ENCODE measurements at regions of chr3 and their contacts with region 1.

Region 1: DNA sequence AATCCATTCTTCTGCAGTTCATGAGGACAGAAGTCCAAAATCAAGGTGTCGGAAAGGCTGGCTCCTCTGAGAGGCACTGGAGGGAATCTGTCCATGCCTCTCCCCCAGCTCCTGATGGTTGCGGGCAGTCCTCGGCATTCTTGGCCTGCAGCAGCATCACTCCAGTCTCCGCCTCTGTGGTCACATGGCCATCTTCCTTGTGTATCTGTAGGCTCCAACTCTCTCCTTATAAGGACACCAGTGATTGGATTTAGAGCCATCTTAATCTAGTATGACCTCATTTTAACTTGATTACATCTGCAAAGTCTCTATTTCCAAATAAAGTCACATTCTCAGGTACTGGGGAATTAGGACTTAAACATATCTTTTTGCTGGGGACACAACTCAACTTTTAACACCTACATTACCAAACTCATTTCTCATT is 56.0 kb upstream of the FLNB start:
- DNase-seq: peak; percentile 83

Region 2: DNA sequence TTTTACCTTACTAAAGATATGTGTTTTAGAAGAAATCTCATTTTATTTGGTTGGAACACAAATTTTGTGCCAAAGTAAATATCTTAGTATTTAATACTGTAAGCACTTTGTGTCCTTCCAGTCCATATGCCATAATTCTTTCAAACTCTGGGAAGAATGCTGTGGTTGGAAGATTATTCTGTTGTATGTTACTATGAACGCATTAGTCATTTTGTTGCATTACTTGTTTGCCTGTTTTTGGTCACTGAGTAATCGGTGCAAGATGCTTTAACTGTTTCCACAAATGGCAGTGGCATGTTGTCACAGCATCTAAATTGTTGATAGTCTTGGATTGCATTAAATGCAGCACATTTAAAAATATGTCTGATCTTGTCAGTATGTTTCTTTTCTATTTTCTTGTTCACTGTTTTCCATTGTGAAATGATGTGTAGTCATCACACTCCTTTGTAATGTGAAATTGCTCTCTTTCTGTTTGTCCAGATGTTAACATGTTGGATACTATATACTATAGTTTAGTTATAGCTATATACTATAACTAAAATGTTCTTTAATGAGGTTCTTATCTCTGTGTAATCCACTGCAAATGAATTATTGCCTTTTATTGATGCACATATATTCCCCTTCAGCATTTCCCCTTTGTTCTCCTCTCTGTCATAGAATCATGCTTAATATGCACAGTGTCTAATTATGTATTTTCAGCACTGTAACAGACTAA is 33.9 kb before region 1 on chr3:
- intact Hi-C with region 1: no loop called
- DNase-seq: no peak

Region 3: DNA sequence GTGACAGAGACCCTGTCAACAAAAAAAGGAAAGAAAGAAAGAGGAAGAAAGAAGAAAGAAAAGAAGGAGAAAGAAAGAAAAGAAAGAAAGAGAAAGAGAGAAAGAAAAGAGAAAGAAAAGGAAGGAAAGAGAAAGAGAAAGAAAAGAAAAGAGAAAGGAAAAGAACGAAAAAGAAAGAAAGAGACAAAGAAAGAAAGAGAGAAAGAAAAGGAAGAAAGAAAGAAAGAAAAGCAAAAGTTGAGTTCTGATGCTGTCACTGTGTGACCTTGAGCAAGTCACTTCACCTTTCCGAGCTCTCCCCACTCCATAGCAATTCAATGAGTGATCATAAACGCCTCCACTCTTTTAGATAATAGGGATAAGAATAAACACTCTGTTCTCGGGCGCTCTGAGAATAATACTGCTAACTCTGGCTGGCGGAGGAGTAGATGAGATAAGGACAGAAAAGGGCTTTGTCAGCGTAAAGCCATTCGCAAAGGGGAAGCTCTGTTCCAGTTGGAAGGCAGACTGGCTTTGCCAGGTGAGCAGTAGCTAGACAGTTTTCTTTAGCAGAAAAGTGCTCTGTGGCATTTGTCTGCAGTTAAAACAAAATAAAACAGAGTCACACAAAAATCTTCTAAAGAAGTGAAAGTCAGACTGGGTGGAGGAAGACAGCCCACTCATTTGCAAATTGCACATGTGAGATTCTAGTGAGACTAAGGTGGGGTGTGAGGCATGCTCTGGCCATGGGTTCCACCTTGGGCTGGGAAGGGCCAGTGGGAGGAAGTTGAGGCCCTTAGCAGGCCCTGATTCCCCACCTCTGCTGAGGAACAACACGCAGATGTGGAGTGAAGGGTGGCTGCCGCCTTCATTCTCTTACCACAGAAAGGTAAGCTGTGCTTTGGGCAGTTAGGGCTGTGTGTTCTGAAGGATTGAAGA is 46.4 kb after region 1 on chr3:
- intact Hi-C with region 1: loop called (anchors 2 kb)
- DNase-seq: no peak